ENCODE measurements at regions of chr21 and their contacts with region 1.

Region 1: DNA sequence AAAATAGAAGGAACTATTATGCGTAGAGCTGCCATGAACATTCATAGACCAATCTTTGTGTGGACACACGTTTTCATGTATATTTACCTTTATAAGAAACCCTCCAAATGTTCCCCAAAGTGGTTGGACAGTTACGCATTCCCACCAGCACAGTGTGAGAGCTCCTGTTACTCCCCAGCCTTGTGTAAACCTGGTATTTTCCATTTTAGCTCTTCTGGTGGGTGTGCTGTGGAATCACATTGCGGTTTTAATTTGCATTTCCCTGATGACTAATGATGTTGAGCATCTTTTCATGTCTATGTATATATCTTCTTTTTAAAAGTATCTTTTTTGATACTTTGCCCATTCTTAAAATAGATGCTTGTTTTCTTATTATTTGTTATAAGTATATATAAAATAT is 3.2 kb upstream of the UBASH3A start:
- DNase-seq: peak; percentile 38
- H3K4me3 Mint-ChIP-seq: no peak overlapping the region
- H3K27ac Mint-ChIP-seq: no peak overlapping the region
- H3K4me1 Mint-ChIP-seq: peaks cover 55% of the 10 kb centered on the region
- H3K27me3 Mint-ChIP-seq: no peaks in the 10 kb centered on the region

Region 2: GRCh38 chr21:41926117-41926806 is 474.3 kb before region 1 on chr21:
- CTCF ChIA-PET with region 1: no interaction called
- intact Hi-C with region 1: loop called (anchors 10 kb)
- DNase-seq: peak; percentile 53
- H3K4me3 Mint-ChIP-seq: peak overlapping the region; percentile 85
- H3K27ac Mint-ChIP-seq: peak overlapping the region; percentile 97
- H3K4me1 Mint-ChIP-seq: peaks cover 71% of the 10 kb centered on the region
- H3K27me3 Mint-ChIP-seq: no peaks in the 10 kb centered on the region

Region 3: GRCh38 chr21:42233067-42233961 is 167.2 kb before region 1 on chr21:
- CTCF ChIA-PET with region 1: no interaction called
- intact Hi-C with region 1: loop called (anchors 5 kb)
- DNase-seq: peak; percentile 95
- H3K4me3 Mint-ChIP-seq: peak overlapping the region; percentile 72
- H3K27ac Mint-ChIP-seq: peak overlapping the region; percentile 95
- H3K4me1 Mint-ChIP-seq: peaks cover 95% of the 10 kb centered on the region
- H3K27me3 Mint-ChIP-seq: no peaks in the 10 kb centered on the region

Region 4: DNA sequence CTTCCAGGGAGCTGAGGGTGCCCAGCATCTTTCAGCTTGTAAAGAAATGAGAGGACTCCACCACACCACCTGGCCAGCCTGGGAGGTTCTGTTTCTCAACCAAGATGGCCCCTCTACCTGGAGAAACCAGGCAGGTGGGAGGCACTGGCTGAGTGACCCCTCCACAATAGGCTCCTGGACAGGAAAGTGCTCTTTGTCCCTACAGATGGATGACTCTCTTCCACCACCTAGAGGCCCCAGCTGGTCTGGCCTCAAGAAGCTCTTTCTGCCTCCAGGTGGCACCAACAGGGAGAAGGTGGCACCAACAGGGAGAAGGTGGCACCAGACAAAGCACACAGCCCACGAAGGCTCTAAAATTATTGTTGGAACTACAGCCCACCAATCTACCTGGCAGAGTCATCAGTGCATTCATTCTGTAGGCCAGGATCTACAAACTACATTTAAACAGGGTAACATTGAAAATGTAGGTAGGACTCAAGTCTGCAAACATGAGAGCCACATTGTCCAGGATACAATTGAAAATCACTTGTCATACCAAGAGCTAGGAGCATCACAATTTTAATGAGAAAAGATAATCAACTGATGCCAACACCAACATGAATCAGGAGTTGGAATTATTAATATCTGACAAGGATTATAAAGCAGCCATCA is 19.1 kb before region 1 on chr21:
- CTCF ChIA-PET with region 1: interaction called, 19 read pairs
- intact Hi-C with region 1: no loop called
- DNase-seq: peak; percentile 81
- H3K4me3 Mint-ChIP-seq: no peak overlapping the region
- H3K27ac Mint-ChIP-seq: no peak overlapping the region
- H3K4me1 Mint-ChIP-seq: peaks cover 5% of the 10 kb centered on the region
- H3K27me3 Mint-ChIP-seq: no peaks in the 10 kb centered on the region

Region 5: DNA sequence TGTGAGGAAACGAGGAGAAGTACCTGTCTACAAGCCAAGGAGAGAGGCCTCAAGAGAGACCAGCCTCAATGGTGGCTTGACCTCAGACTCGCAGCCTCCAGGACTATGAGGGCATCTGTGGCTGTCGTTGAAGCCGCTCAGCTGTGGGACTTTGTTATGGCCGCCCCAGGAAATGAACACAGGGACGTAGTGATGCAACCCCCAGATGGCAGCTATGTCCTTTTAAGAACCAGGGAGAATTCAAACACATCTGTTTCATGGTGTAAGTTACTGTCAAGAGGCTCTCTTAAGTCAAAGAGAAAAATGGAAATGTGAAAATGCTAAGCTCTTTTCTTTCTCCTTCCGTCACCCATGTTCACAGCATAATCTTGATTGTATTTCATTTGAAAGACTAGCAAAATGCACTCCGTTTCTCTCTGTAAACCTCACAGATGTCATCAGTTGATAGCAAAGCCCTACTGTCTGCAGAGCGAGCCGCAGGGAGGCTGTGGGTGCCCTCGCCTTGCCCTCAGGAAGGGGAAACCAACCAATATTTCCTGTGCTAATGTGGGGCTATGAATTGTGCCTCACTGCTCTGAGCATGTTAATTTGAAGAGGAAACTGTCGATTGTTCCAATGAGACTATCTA is 24.5 kb after region 1 on chr21:
- CTCF ChIA-PET with region 1: interaction called, 12 read pairs
- intact Hi-C with region 1: loop called (anchors 2 kb)
- DNase-seq: peak; percentile 75
- H3K4me3 Mint-ChIP-seq: peak overlapping the region; percentile 44
- H3K27ac Mint-ChIP-seq: peak overlapping the region; percentile 61
- H3K4me1 Mint-ChIP-seq: peaks cover 67% of the 10 kb centered on the region
- H3K27me3 Mint-ChIP-seq: no peaks in the 10 kb centered on the region

Region 6: DNA sequence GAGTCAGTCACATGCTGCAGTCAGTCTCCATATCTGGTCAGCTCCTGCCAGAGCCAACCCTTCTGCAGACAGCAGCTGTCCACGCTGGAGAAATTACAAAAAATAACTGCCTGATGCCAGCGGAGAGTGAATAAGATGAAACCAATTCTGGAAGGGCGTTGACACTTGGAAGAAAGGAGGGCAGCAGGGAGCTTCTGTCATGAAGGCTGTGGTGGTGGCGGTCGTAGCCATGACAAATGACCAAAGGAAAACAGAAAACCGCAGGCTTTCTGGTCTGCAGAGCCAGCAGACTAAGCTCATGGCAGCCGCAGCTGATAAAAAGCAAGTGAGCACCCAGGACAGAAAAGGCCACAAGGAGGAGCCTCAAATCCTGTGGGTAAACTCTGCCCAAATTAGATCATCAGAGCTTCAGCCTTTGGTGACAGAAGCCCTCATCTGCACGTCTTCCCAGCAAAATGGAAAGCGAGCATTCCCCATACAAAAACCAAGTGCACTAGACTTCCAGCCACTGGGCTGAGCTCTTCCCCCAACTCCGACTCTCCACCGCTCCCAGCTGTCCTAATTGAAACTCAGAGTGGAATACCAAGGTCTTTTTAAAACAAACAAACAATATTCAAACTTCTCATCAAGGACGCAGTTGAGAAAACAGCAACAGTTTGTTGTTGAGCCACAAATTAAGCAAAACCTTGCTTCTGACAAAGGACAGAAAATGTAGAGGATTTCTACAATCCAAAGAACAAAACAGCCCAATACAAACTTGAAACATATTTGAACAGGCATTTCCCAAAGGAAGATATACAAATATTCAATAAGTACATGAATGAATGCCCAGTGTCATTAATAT is 66.8 kb after region 1 on chr21:
- CTCF ChIA-PET with region 1: no interaction called
- intact Hi-C with region 1: no loop called
- DNase-seq: peak; percentile 35
- H3K4me3 Mint-ChIP-seq: no peak overlapping the region
- H3K27ac Mint-ChIP-seq: no peak overlapping the region
- H3K4me1 Mint-ChIP-seq: peaks cover 30% of the 10 kb centered on the region
- H3K27me3 Mint-ChIP-seq: no peaks in the 10 kb centered on the region